ENCODE measurements at regions of chr1 and their contacts with region 1.

Region 1: DNA sequence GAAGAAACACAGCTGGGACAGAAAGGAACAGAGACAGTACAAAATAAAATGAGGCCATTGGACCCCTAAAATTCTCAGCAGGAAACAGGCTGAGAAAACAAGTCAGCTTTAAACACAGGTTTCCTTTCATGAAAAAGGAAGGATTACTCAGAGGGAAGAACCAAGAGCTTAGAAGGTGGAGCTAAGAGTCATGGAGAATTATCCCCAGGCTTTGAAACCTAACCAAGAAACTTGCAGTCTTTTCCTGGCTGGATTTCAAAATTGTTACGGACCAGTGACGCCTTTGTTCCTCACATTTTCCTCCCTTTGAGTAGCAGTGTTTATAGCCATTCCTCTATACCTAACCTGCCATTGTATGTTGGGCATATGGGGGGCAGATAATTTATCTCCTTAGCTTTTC is 8.8 kb downstream of the HMGB4 start:
- DNase-seq: no peak
- H3K4me3 Mint-ChIP-seq: no peak overlapping the region
- H3K27ac Mint-ChIP-seq: no peak overlapping the region
- H3K4me1 Mint-ChIP-seq: no peaks in the 10 kb centered on the region
- H3K27me3 Mint-ChIP-seq: peaks cover 4% of the 10 kb centered on the region

Region 2: DNA sequence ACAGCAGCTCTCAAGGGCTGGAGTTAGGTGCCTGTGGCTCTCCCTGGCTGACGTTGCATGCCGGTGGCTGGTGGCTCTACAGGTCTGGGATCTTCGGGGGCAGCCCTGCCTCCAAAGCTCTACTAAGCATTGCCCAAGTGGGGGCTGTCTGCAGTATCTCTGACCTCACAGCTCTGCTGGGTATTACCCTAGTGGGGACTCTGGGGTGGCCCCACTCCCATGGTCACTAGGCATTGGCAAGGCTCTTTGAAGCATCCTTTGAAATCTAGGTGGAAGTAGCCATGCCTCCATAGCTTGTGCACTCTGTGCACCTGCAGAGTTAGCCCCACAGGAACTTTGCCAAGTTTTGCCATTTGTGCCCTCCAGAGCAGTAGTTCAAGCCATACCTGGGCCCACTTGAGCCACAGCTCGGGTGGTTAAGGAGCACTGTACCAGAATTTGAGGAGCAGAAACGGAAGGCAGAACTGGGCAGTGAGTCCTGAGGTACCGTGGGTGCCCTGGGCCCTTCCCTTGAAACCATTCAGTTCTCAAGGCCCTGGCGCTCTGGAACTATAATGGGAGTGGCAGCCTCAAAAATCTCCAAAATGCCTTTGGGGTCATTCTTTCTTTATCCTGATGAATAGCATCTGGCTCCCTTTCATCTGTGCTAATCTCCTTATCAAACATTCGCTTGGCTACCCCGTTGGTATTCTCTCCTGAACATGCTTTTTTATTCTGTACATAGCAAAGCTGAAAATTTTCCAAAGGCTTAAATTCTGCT is 935.5 kb after region 1 on chr1:
- CTCF ChIA-PET with region 1: no interaction called
- POLR2A ChIA-PET with region 1: interaction called, 10 read pairs
- DNase-seq: no peak
- H3K4me3 Mint-ChIP-seq: no peak overlapping the region
- H3K27ac Mint-ChIP-seq: no peak overlapping the region
- H3K4me1 Mint-ChIP-seq: peaks cover 2% of the 10 kb centered on the region
- H3K27me3 Mint-ChIP-seq: no peaks in the 10 kb centered on the region

Measured in activated CD4-positive, alpha-beta T cell treated with anti-CD3 and anti-CD28 coated beads, Interleukin-2, amount 10 ng/mL, durations not matched to agents 7 days and 5 days (primary cell).